ENCODE measurements at regions of chr12 and their contacts with region 1.

Region 1: GRCh38 chr12:94762259-94762942 is 112.0 kb upstream of the TMCC3 start:
- DNase-seq: peak in 1 of 2 experiments; percentile 72
- H3K4me3 ChIP-seq: no peak overlapping the region
- H3K27ac ChIP-seq: peak overlapping the region; percentile 67
- H3K4me1 ChIP-seq: peaks cover 30% of the 10 kb centered on the region
- H3K27me3 ChIP-seq: no peaks in the 10 kb centered on the region
- CTCF ChIP-seq: no peak

Region 2: GRCh38 chr12:94545935-94546771 is 216.2 kb before region 1 on chr12:
- CTCF ChIA-PET with region 1: interaction called, 3 read pairs
- POLR2A ChIA-PET with region 1: no interaction called
- intact Hi-C with region 1: loop called (anchors 1 kb)
- DNase-seq: peak; percentile 56
- H3K4me3 ChIP-seq: no peak overlapping the region
- H3K27ac ChIP-seq: no peak overlapping the region
- H3K4me1 ChIP-seq: peaks cover 5% of the 10 kb centered on the region; the same call in 1 of the 2 replicates
- H3K27me3 ChIP-seq: no peaks in the 10 kb centered on the region
- CTCF ChIP-seq: peak; percentile 73

Region 3: GRCh38 chr12:94609917-94610443 is 152.4 kb before region 1 on chr12:
- CTCF ChIA-PET with region 1: no interaction called
- POLR2A ChIA-PET with region 1: no interaction called
- intact Hi-C with region 1: no loop called
- DNase-seq: no peak
- H3K4me3 ChIP-seq: no peak overlapping the region
- H3K27ac ChIP-seq: no peak overlapping the region
- H3K4me1 ChIP-seq: peaks cover 16% of the 10 kb centered on the region
- H3K27me3 ChIP-seq: no peaks in the 10 kb centered on the region
- CTCF ChIP-seq: no peak

Region 4: DNA sequence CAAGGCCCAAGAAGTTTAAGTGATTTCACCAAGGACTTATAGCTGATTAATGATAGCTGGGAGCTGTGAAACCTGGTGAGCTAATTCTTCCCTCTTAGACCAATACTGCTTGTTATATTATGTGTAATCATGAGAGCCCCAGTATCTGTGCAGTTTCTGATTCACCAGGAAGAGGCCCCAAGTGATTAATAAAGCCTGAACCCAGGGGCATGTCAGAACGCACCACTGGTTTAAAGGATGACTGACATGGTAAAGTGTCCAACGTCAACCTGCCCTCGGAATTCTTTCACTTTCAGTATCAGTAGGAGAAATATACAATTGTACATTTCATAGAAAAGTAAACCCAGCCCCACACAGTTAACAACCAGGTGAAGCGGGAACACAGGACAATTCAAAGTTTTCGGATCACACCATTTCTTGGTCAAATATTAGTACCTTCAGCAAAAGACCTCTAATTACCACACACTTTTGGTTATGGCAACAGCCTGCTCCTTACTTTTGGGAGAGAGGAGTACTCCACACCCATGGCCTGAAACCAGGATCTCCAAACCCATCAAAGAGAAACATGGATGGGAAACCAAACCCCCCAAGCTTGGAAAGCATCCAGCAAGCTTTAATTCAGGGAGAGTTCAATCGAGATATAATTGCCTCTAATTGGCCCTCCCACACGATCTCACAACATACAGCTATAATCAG is 140.6 kb before region 1 on chr12:
- CTCF ChIA-PET with region 1: no interaction called
- POLR2A ChIA-PET with region 1: no interaction called
- intact Hi-C with region 1: loop called (anchors 5 kb)
- DNase-seq: peak; percentile 42 to 93
- H3K4me3 ChIP-seq: peak overlapping the region; percentile 51
- H3K27ac ChIP-seq: peak overlapping the region; percentile 86
- H3K4me1 ChIP-seq: peaks cover 57% of the 10 kb centered on the region
- H3K27me3 ChIP-seq: no peaks in the 10 kb centered on the region
- CTCF ChIP-seq: no peak

Region 5: GRCh38 chr12:94644141-94644979 is 118.0 kb before region 1 on chr12:
- CTCF ChIA-PET with region 1: no interaction called
- POLR2A ChIA-PET with region 1: no interaction called
- intact Hi-C with region 1: loop called (anchors 1 kb)
- DNase-seq: peak; percentile 57 to 94
- H3K4me3 ChIP-seq: peak overlapping the region; percentile 45; the same call in 1 of the 2 replicates
- H3K27ac ChIP-seq: peak overlapping the region; percentile 94
- H3K4me1 ChIP-seq: peaks cover 67% of the 10 kb centered on the region
- H3K27me3 ChIP-seq: no peaks in the 10 kb centered on the region
- CTCF ChIP-seq: no peak

Region 6: GRCh38 chr12:94649349-94650142 is 112.9 kb before region 1 on chr12:
- CTCF ChIA-PET with region 1: no interaction called
- POLR2A ChIA-PET with region 1: no interaction called
- intact Hi-C with region 1: loop called (anchors 1 kb)
- DNase-seq: peak in 1 of 2 experiments; percentile 54
- H3K4me3 ChIP-seq: peak overlapping the region; percentile 91
- H3K27ac ChIP-seq: peak overlapping the region; percentile 69
- H3K4me1 ChIP-seq: peaks cover 41% of the 10 kb centered on the region
- H3K27me3 ChIP-seq: no peaks in the 10 kb centered on the region
- CTCF ChIP-seq: no peak; the same call in 1 of the 2 replicates

Region 7: DNA sequence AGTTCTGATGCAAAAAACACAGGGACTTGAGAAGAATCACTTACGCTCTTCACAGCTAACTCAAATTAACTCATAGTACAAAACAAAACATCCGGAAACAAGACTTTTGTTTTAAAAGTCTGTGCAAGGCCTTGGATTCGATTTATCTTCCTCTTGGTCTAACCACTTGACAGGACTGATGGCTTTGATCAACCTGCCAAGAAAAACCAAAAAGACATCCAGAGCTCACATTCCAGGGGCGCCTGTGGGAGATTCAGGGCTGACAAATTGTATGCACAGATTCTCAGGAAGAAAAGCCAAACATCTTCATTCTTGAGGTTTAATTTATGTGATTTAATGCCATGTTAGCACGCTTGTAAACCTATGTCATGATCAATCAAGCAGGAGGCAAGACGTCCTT is 17.1 kb after region 1 on chr12:
- CTCF ChIA-PET with region 1: no interaction called
- POLR2A ChIA-PET with region 1: no interaction called
- intact Hi-C with region 1: no loop called
- DNase-seq: no peak
- H3K4me3 ChIP-seq: no peak overlapping the region
- H3K27ac ChIP-seq: no peak overlapping the region
- H3K4me1 ChIP-seq: no peaks in the 10 kb centered on the region
- H3K27me3 ChIP-seq: no peaks in the 10 kb centered on the region
- CTCF ChIP-seq: no peak

Region 8: DNA sequence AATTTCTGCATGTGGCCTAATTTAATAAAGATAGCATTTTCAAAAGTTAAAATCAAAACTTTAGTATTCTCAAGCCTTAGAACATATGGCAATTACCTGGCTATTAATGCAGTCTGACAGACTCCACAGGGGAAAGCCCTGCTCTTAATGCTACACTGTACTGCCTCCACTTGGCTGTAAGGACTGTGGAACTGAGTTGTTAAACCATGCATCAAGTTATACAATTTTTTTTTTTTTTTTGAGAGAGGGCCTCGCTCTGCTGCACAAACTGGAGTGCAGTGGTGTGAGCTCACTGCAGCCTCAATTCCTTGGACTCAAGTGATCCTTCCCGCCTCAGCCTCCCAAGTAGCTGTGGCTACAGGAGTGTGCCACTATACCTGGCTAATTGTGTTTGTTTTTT is 260.1 kb after region 1 on chr12:
- CTCF ChIA-PET with region 1: no interaction called
- POLR2A ChIA-PET with region 1: interaction called, 14 read pairs
- intact Hi-C with region 1: no loop called
- DNase-seq: no peak
- H3K4me3 ChIP-seq: no peak overlapping the region
- H3K27ac ChIP-seq: no peak overlapping the region
- H3K4me1 ChIP-seq: no peaks in the 10 kb centered on the region
- H3K27me3 ChIP-seq: no peaks in the 10 kb centered on the region
- CTCF ChIP-seq: no peak

Measured in PC-9 (cell line).